Caco-2 (cell line): ENCODE measurements at regions of chr6 and their contacts with region 1.

Region 1: GRCh38 chr6:71299541-71300470 is 11.2 kb downstream of the OGFRL1 start:
- DNase-seq: no peak
- H3K4me3 ChIP-seq: no peak overlapping the region
- H3K4me3 Mint-ChIP-seq: no peak overlapping the region
- H3K27ac Mint-ChIP-seq: no peak overlapping the region
- H3K4me1 ChIP-seq: no peaks in the 10 kb centered on the region
- H3K4me1 Mint-ChIP-seq: no peaks in the 10 kb centered on the region
- H3K27me3 ChIP-seq: no peaks in the 10 kb centered on the region
- H3K27me3 Mint-ChIP-seq: no peaks in the 10 kb centered on the region
- CTCF ChIP-seq: no peak

Region 2: DNA sequence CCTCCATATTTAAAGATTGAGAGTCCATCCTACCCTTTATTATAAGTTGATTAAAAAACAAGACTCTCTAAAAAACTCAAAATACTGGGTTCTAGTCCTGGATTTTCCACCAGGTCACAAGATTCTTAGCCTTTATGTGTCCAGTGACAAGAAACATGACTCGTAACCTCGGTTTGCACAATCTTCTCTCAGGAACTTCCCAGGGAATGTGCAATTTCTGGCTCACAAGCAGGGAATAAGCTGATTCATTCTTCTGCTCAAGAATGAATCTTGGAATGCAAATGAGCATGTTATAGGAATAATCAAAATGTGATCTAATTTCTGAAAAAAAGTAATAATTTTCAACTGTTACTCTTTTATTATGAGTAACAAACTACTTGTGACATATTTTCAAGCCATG is 33.9 kb after region 1 on chr6:
- CTCF ChIA-PET with region 1: no interaction called
- POLR2A ChIA-PET with region 1: no interaction called
- intact Hi-C with region 1: no loop called
- DNase-seq: no peak
- H3K4me3 ChIP-seq: no peak overlapping the region
- H3K4me3 Mint-ChIP-seq: no peak overlapping the region
- H3K27ac Mint-ChIP-seq: no peak overlapping the region
- H3K4me1 ChIP-seq: no peaks in the 10 kb centered on the region
- H3K4me1 Mint-ChIP-seq: no peaks in the 10 kb centered on the region
- H3K27me3 ChIP-seq: no peaks in the 10 kb centered on the region
- H3K27me3 Mint-ChIP-seq: peaks cover 4% of the 10 kb centered on the region
- CTCF ChIP-seq: no peak

Region 3: DNA sequence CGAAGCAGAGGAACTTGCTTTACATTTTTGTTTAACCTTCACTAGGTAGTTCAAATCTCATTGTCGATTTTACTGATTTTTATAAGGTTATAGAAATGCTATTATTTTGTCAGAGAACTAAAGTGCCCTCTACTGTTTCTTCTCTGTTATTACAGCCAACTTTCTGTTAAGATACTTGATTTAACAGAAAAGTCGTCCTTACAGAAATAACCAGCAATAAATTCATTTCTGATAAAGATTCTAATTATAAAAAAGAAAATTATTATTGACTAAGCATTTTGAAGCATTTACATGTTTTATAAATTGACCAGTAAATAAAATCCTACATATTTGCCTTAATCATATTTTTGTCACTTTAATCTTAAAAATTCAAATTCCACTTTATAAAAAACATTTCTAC is 49.6 kb after region 1 on chr6:
- CTCF ChIA-PET with region 1: no interaction called
- POLR2A ChIA-PET with region 1: no interaction called
- intact Hi-C with region 1: loop called (anchors 1 kb)
- DNase-seq: no peak
- H3K4me3 ChIP-seq: no peak overlapping the region
- H3K4me3 Mint-ChIP-seq: no peak overlapping the region
- H3K27ac Mint-ChIP-seq: no peak overlapping the region
- H3K4me1 ChIP-seq: no peaks in the 10 kb centered on the region
- H3K4me1 Mint-ChIP-seq: no peaks in the 10 kb centered on the region
- H3K27me3 ChIP-seq: no peaks in the 10 kb centered on the region
- H3K27me3 Mint-ChIP-seq: peaks cover 15% of the 10 kb centered on the region
- CTCF ChIP-seq: peak; percentile 50 to 58

Region 4: GRCh38 chr6:71457929-71458328 is 158.1 kb after region 1 on chr6:
- CTCF ChIA-PET with region 1: no interaction called
- POLR2A ChIA-PET with region 1: no interaction called
- intact Hi-C with region 1: no loop called
- DNase-seq: peak in 1 of 2 experiments; percentile 4
- H3K4me3 ChIP-seq: no peak overlapping the region
- H3K4me3 Mint-ChIP-seq: no peak overlapping the region
- H3K27ac Mint-ChIP-seq: no peak overlapping the region
- H3K4me1 ChIP-seq: no peaks in the 10 kb centered on the region
- H3K4me1 Mint-ChIP-seq: no peaks in the 10 kb centered on the region
- H3K27me3 ChIP-seq: no peaks in the 10 kb centered on the region
- H3K27me3 Mint-ChIP-seq: no peaks in the 10 kb centered on the region
- CTCF ChIP-seq: no peak